Right lobe of liver (tissue), 6 donors: ENCODE measurements at regions of chr22 and their contacts with region 1.

Region 1: DNA sequence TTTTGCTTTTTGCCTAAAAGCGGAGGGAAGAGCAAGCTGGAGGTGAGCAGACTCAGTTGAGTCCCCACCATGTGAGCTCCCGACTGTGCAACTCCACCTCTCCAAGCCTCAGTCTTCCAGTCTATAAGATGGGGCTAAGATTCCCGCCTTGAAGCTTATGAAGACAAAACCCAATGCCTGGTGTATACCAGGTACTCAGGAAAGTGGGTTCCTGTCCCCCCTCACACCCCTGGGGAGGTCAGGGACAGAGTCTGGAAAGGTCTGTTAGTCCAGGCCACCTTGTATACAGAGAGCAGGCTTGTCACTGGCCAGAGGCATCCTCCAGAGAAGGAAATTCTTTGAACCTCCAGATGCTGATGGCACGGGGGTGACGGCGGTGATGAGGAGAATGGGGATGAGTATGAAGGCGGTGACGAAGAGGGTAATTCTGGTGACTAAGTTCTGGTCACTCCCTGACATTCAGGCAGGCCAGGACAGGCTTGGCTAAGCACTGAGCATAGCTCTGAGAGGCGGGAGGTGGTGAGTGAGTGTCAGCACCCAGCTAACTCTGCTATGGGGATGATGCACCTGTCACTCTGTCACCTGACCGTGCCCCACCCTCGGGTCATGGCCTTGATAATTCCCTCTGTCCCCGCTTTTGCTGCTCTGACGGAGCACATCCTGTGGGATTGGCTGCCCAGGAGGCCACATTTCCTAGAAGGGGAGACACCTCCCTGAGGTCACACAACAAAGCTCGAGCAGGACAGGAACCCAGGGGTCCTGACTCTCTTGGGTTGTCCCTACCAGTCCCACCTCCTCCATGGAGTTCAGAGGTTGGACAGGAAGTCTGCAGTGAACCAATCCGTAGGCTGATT is 30.9 kb upstream of the CSNK1E start:
- DNase-seq: peak in 1 of 3 donors; percentile 33
- ATAC-seq: peak in 3 of 4 donors; percentile 12 to 19 (median 13)
- H3K4me3 ChIP-seq: no peak overlapping the region
- H3K27ac ChIP-seq: no peak overlapping the region
- H3K4me1 ChIP-seq: no peaks in the 10 kb centered on the region
- H3K27me3 ChIP-seq: no peaks in the 10 kb centered on the region
- CTCF ChIP-seq: no peak
- POLR2A ChIP-seq: no peak

Region 2: DNA sequence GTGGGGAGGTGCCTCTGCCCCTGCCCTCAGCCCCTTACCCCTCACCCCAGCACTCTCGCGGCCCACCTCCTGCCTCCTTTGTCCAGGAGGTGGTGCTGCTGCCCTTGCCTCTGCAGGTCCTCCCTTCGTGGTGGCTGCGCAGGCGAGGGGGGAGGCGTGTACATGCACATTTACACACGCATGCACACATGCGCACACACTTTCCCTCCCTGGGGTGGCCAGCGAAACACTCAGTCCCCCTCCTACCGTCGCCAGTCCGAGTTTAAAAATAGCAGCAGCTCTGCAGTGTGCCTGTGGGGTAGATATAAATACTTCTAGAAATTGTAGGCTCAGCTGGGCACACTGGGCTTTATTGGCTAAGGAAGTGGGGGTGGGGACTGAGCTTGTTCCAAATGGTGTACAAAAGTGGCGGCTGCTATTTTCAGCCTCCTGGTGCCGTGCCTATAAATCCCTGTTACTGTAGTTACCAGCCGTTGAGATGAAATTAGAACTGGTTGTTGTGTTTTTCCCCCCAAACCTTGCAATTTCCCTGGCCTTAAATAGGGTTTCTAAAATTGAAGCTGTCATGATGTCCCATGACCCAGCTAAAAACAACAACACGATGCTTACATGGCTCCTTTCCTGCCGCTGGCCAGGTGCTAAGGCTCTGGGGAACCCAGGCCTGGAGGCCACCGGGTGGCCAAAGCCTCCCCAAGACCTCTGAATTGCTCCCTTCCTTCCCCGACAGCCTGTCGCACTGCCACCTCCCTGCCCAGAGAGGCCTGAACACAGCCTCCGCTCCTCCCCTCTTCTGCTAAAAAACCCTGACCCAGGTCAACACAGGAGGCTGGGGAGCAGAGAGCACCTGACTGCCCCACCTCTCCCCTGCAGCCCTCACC is 278.5 kb before region 1 on chr22:
- intact Hi-C with region 1: loop called in 1 of 2 experiments (anchors 10 kb)
- DNase-seq: peak; percentile 38 to 51 (median 45)
- ATAC-seq: peak in 2 of 4 donors; percentile 15
- H3K4me3 ChIP-seq: no peak overlapping the region
- H3K27ac ChIP-seq: no peak overlapping the region
- H3K4me1 ChIP-seq: peaks cover 0 to under 1% (median 0%) of the 10 kb centered on the region in 4 donors
- H3K27me3 ChIP-seq: no peaks in the 10 kb centered on the region
- CTCF ChIP-seq: peak; percentile 9 to 37 (median 30)
- POLR2A ChIP-seq: no peak

Region 3: DNA sequence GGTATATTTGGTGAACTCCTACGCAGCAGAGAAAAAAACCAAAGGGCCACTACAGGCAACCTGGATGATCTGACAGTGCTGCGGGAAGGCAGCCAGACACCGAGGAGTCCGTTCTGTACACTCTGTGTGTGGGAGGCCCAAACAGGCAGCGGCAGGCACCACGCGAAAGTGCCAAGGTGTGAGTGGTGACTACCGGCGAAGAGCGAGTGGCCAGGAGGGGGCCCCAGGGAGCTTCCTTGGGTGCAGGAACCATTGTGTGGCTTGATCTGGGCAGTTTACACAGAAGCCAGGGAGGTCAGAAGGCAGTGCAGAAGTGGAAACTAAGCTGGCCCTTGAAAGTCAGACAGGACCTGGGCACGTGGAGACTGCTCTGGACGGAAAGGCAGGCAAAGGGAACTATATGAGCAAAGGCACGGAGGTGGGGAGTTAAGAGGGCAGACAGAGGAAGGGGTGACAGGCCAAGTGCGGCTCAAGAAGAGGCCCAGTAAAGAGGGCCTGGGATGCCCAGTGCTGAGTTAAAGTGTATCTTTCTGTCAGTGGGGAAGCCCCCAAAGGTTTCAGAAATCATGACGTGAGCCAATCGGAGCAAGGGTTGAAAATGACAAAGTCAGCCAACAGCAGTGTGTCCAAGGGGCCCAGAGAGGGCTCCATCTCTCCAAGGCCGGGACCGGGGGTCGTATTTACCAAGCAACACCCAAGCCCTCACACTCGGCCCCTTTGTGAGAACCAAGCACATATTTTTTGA is 85.9 kb before region 1 on chr22:
- intact Hi-C with region 1: loop called in 1 of 2 experiments (anchors 10 kb)
- DNase-seq: peak; percentile 68 to 78 (median 76)
- ATAC-seq: peak; percentile 71 to 88 (median 78)
- H3K4me3 ChIP-seq: no peak overlapping the region
- H3K27ac ChIP-seq: no peak overlapping the region
- H3K4me1 ChIP-seq: peaks cover 0 to 11% (median 4%) of the 10 kb centered on the region in 4 donors
- H3K27me3 ChIP-seq: no peaks in the 10 kb centered on the region
- CTCF ChIP-seq: peak; percentile 39 to 69 (median 47)
- POLR2A ChIP-seq: no peak